ENCODE measurements at regions of chr5 and their contacts with region 1.

Region 1: DNA sequence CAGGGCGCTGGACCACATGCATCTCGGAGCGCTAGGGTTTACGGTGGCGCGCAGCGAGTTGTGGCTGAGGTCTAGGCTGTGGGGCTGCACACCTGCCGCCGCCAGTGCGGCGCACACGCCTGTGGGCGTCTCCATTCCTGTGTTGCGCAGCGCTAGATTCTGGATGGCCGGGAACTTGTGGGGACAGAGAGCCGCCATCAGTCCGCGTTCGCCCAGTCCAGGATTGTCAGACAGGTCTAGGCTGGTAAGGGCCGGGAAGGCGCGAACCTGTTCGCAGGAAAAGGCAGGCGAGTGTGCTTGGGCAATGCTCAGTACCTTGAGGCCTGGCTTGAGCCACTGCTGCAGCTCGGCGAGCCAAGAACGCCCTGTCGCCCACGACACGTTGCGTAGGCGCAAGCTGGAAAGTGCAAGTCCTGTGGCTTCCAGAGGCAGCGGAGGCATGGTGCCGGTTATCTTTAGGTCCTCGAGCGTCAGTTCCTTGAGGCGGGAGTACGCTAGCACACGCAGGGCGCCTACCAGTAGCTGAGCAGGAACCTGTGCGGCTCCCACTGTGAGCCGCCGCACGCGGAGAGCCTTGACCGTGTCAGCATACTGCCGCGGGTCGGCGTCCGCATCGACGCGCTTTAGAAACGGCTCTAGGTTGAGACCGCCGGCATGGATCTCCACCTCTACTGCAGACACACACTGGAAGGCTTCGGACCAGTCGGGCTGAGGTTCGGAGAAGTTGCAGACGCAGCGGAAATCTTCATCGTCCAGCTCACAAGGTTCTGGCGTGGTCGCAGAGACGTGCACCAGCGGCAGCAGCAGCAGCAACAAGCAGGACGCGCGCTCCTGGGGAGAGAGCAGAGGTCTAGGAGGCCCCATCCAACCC is 590 bp downstream of the CD14 start:
- DNase-seq: peak; percentile 67
- H3K4me3 ChIP-seq: peak overlapping the region; percentile 28 to 57 (median 47)
- H3K27ac ChIP-seq: no peak overlapping the region
- H3K4me1 ChIP-seq: peaks cover 15% of the 10 kb centered on the region
- H3K27me3 ChIP-seq: peaks cover 0 to 3% of the 10 kb centered on the region in 2 experiments
- CTCF ChIP-seq: no peak
- POLR2A ChIP-seq: no peak

Region 2: GRCh38 chr5:140312067-140312790 is 320.2 kb before region 1 on chr5:
- CTCF ChIA-PET with region 1: no interaction called
- POLR2A ChIA-PET with region 1: no interaction called
- dilution Hi-C with region 1: no loop called
- intact Hi-C with region 1: no loop called
- DNase-seq: peak; percentile 99
- H3K4me3 ChIP-seq: peak overlapping the region in 2 of 3 experiments; percentile 10 to 18
- H3K27ac ChIP-seq: peak overlapping the region; percentile 98
- H3K4me1 ChIP-seq: peaks cover 40% of the 10 kb centered on the region
- H3K27me3 ChIP-seq: no peaks in the 10 kb centered on the region
- CTCF ChIP-seq: no peak
- POLR2A ChIP-seq: peak; percentile 65

Region 3: GRCh38 chr5:140341591-140341990 is 290.8 kb before region 1 on chr5:
- CTCF ChIA-PET with region 1: no interaction called
- POLR2A ChIA-PET with region 1: no interaction called
- dilution Hi-C with region 1: no loop called
- intact Hi-C with region 1: no loop called
- DNase-seq: no peak
- H3K4me3 ChIP-seq: no peak overlapping the region
- H3K27ac ChIP-seq: peak overlapping the region; percentile 51
- H3K4me1 ChIP-seq: peaks cover 52% of the 10 kb centered on the region
- H3K27me3 ChIP-seq: no peaks in the 10 kb centered on the region
- CTCF ChIP-seq: no peak
- POLR2A ChIP-seq: no peak

Region 4: DNA sequence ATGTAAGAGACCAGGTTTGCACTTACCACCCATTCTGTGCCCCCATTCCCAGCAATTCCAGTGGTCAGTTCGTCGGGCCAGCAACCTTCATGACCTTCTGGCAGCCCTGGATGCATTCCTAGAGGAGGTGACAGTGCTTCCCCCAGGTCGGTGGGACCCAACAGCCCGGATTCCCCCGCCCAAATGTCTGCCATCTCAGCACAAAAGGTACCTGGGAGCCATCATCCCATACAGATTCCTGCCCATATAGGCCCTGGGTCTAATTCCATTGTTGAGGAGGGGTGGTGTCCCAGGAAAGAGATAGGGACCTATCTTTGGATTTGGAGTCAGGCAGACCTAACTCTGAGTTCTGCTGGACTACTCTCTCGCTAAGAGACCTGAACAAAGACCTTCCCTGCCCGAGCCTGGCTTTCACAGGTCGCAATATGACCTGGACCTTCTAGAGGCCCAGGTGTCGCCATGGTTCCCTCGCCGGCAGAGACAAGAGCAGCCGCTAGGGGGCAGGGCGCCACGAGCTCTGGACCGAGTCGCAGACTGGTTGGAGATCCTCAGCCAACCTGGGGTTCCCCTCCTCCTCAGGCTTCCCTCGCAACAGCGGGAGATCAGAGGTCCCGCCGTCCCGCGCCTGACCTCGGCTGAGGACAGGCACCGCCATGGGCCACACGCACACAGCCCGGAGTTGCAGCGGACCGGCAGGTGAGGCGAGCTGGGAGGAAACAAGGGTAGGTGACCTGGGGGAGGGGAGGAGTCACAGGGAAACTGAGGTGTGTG is 269.3 kb before region 1 on chr5:
- CTCF ChIA-PET with region 1: interaction called, 8 read pairs
- POLR2A ChIA-PET with region 1: no interaction called
- dilution Hi-C with region 1: no loop called
- intact Hi-C with region 1: loop called (anchors 1 kb)
- DNase-seq: peak; percentile 61
- H3K4me3 ChIP-seq: peak overlapping the region in 2 of 3 experiments; percentile 20 to 24
- H3K27ac ChIP-seq: no peak overlapping the region
- H3K4me1 ChIP-seq: peaks cover 3% of the 10 kb centered on the region
- H3K27me3 ChIP-seq: no peaks in the 10 kb centered on the region
- CTCF ChIP-seq: peak; percentile 97 to 98
- POLR2A ChIP-seq: no peak

Region 5: DNA sequence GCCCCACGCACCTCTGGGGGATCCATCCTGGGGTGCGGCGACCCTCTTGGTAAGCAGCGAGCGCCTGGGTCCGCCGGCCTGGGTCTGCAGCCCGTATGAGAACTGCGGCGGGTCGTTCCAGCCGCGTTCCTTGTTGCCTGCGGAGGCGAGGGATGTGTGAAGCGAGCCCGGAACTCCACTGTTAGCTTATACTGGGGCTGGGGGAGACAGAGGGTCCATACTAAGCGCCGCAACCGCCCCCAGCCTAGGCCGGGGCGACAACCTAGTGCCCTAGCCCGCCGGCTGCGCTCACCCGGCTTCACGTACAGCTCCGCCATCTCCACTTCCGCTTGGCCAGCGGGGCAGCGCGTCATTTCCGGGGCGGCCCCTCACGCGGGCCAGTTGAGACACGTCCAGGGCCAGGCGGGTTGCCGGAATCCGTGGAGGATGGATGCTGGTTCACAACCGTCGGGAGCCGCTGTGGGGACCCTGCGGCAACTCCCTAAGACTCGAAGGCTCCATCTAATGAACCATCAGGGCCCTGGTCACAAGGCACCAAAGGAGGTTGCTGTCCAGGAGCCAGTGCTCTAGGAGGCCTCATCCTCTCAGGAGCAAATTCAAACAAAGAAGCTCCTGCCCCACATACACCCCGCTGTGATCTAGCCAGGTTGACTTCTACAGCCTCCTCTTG is 75.1 kb before region 1 on chr5 and contains the start of gene SRA1:
- CTCF ChIA-PET with region 1: interaction called, 13 read pairs
- POLR2A ChIA-PET with region 1: no interaction called
- dilution Hi-C with region 1: no loop called
- intact Hi-C with region 1: no loop called
- DNase-seq: peak; percentile 92
- H3K4me3 ChIP-seq: peak within 1 kb of the TSS; percentile 54 to 92 (median 83)
- H3K27ac ChIP-seq: peak within 1 kb of the TSS; percentile 79
- H3K4me1 ChIP-seq: peaks cover 15% of the 10 kb centered on the region
- H3K27me3 ChIP-seq: no peaks in the 10 kb centered on the region
- CTCF ChIP-seq: no peak
- POLR2A ChIP-seq: peak; percentile 99
- total RNA-seq, gene SRA1: 19.7 and 29.7 TPM in 2 replicates

Region 6: DNA sequence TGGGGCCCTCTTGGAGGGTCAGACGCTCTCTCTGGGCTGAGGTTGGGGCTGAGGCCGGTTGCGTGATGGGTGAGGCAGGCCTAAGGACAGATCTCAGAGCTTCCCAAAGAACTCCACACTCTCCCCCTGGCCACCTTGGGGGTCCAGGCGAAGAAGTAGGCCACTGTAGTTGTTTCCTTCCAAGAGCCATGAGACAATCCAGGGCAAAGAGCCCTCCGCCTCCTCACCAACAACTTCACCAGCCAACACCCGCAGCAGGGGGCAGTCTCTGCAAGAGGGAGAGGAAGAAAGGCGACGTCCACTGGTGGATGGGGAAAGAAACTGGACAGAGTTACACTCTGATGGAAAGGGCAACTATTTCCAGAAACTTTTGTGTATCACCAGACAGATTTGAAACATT is 57.1 kb before region 1 on chr5:
- CTCF ChIA-PET with region 1: interaction called, 108 read pairs
- POLR2A ChIA-PET with region 1: no interaction called
- dilution Hi-C with region 1: no loop called
- intact Hi-C with region 1: loop called (anchors 1 kb)
- DNase-seq: peak; percentile 41
- H3K4me3 ChIP-seq: no peak overlapping the region
- H3K27ac ChIP-seq: no peak overlapping the region
- H3K4me1 ChIP-seq: peaks cover 7% of the 10 kb centered on the region
- H3K27me3 ChIP-seq: peaks cover 0 to 2% of the 10 kb centered on the region in 2 experiments
- CTCF ChIP-seq: peak; percentile 56 to 57
- POLR2A ChIP-seq: no peak

Region 7: GRCh38 chr5:140647042-140647341 is 14.6 kb after region 1 on chr5:
- CTCF ChIA-PET with region 1: interaction called, 11 read pairs
- POLR2A ChIA-PET with region 1: no interaction called
- dilution Hi-C with region 1: no loop called
- intact Hi-C with region 1: no loop called
- DNase-seq: peak; percentile 10
- H3K4me3 ChIP-seq: peak overlapping the region; percentile 65 to 90 (median 76)
- H3K27ac ChIP-seq: peak overlapping the region; percentile 21
- H3K4me1 ChIP-seq: peaks cover 13% of the 10 kb centered on the region
- H3K27me3 ChIP-seq: no peaks in the 10 kb centered on the region
- CTCF ChIP-seq: no peak
- POLR2A ChIP-seq: no peak